ENCODE measurements at regions of chr3 and their contacts with region 1.

Region 1: GRCh38 chr3:153161138-153161713 is 800 bp upstream of the RAP2B start:
- DNase-seq: peak; percentile 99
- H3K4me3 ChIP-seq: peak overlapping the region; percentile 87
- H3K27ac ChIP-seq: peak overlapping the region; percentile 82
- H3K4me1 ChIP-seq: peaks cover 29% of the 10 kb centered on the region
- CTCF ChIP-seq: no peak

Region 2: DNA sequence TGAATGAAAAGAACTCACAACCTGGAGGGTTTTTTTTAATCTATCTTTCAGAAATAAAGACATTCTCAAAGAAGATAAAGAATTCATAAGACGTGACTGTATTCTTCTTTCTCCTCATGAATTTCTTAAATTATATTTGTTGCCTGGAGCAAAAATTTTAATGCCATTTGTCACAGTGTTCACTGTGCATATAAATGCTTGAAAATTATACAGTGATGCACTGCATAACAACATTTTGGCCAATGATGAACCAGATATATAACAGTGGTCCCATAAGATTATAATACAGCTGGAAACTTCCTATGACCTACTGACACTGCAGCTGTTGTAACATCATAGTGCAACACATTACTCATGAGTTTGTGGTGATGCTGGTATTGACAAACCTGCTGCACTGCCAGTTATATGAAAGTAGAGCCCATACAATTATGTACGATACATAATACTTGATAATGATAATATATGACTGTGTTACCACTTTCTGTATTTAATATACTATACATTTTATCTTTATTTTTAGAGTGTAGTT is 259.0 kb before region 1 on chr3:
- CTCF ChIA-PET with region 1: no interaction called
- POLR2A ChIA-PET with region 1: no interaction called
- intact Hi-C with region 1: no loop called
- DNase-seq: no peak
- H3K4me3 ChIP-seq: no peak overlapping the region
- H3K27ac ChIP-seq: no peak overlapping the region
- H3K4me1 ChIP-seq: no peaks in the 10 kb centered on the region
- CTCF ChIP-seq: no peak

Region 3: GRCh38 chr3:153096611-153097202 is 64.5 kb before region 1 on chr3:
- CTCF ChIA-PET with region 1: no interaction called
- POLR2A ChIA-PET with region 1: no interaction called
- intact Hi-C with region 1: no loop called
- DNase-seq: no peak
- H3K4me3 ChIP-seq: no peak overlapping the region
- H3K27ac ChIP-seq: no peak overlapping the region
- H3K4me1 ChIP-seq: no peaks in the 10 kb centered on the region
- CTCF ChIP-seq: no peak

Region 4: GRCh38 chr3:153150991-153151390 is 10.2 kb before region 1 on chr3:
- CTCF ChIA-PET with region 1: no interaction called
- POLR2A ChIA-PET with region 1: interaction called, 10 read pairs
- intact Hi-C with region 1: no loop called
- DNase-seq: no peak
- H3K4me3 ChIP-seq: no peak overlapping the region
- H3K27ac ChIP-seq: no peak overlapping the region
- H3K4me1 ChIP-seq: no peaks in the 10 kb centered on the region
- CTCF ChIP-seq: no peak

Region 5: GRCh38 chr3:153621953-153622352 is 460.7 kb after region 1 on chr3:
- CTCF ChIA-PET with region 1: no interaction called
- POLR2A ChIA-PET with region 1: interaction called, 6 read pairs
- intact Hi-C with region 1: loop called (anchors 2 kb)
- DNase-seq: peak; percentile 78
- H3K4me3 ChIP-seq: peak overlapping the region; percentile 54
- H3K27ac ChIP-seq: peak overlapping the region; percentile 88
- H3K4me1 ChIP-seq: peaks cover 71% of the 10 kb centered on the region
- CTCF ChIP-seq: no peak

Region 6: GRCh38 chr3:153744889-153745288 is 583.7 kb after region 1 on chr3:
- CTCF ChIA-PET with region 1: no interaction called
- POLR2A ChIA-PET with region 1: interaction called, 23 read pairs
- intact Hi-C with region 1: loop called (anchors 2 kb)
- DNase-seq: no peak
- H3K4me3 ChIP-seq: peak overlapping the region; percentile 62
- H3K27ac ChIP-seq: peak overlapping the region; percentile 78
- H3K4me1 ChIP-seq: peaks cover 75% of the 10 kb centered on the region
- CTCF ChIP-seq: no peak

Region 7: DNA sequence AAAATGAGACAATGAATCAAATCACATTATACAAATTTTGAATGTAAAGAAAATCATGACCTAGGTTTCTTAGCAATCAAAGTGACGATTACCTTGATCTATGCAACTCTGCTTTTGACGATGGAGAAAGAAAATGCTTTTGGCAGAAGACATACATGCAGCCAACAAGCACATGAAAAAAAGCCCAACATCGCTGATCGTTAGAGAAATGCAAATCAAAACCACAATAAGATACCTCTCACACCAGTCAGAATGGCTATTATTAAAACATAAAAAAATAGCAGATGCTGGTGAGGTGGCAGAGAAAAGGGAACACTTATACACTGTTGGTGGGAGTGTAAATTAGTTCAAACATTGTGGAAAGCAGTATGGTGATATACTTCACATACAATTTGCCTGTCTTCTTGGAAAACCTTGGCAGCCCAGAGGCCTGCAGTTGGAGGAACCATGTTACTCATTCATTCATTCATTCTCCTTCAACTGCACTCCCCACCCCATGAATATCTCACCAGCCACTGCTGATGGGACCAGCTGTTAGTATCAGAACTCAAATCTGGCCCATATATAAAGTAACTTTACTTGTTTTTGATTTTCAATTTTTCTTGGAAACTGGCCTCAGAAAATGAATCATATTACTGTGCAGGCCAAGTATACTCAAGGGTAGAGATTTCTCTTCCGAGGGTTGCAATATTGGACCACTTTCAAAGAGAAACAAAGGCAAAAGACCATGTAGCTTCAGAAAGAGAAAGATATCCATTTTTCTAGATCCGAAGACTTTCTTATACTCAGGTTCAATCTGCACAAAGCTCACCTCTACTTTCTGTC is 601.4 kb after region 1 on chr3:
- CTCF ChIA-PET with region 1: interaction called, 3 read pairs
- POLR2A ChIA-PET with region 1: interaction called, 9 read pairs
- intact Hi-C with region 1: loop called (anchors 1 kb)
- DNase-seq: peak; percentile 81
- H3K4me3 ChIP-seq: peak overlapping the region; percentile 75
- H3K27ac ChIP-seq: peak overlapping the region; percentile 94
- H3K4me1 ChIP-seq: peaks cover 58% of the 10 kb centered on the region
- CTCF ChIP-seq: no peak

Measured in OCI-LY7 (cell line).